Body of pancreas (tissue), 4 donors: ENCODE measurements at regions of chr11 and their contacts with region 1.

Region 1: GRCh38 chr11:120295084-120295483 is 30.0 kb upstream of the TLCD5 start:
- DNase-seq: peak; percentile 52 to 74 (median 71)
- ATAC-seq: peak; percentile 66
- H3K4me3 ChIP-seq: no peak overlapping the region
- H3K27ac ChIP-seq: peak overlapping the region in 2 of 4 donors; percentile 37 to 41
- H3K4me1 ChIP-seq: peaks cover 13% of the 10 kb centered on the region
- H3K27me3 ChIP-seq: no peaks in the 10 kb centered on the region
- CTCF ChIP-seq: no peak
- POLR2A ChIP-seq: no peak

Region 2: DNA sequence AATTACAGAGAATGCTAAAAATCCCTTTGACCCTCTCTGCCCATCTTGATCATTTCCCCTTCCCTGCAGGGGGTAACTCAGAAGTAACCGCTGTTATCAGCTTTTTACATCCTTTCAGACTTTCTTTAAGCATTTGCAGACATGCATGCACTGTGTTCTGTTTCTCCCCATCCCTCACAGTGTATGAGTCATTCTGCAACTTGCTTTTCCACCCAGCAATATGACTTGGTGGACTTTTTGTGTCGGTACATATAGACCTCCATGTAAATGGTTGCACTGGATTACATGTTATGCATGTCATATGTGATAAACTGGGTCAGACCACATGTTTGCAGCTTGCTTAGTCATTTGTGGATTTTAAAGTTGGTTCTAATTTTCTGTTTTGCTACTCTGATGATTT is 478.4 kb before region 1 on chr11:
- intact Hi-C with region 1: no loop called
- DNase-seq: no peak
- ATAC-seq: no peak
- H3K4me3 ChIP-seq: no peak overlapping the region
- H3K27ac ChIP-seq: no peak overlapping the region
- H3K4me1 ChIP-seq: no peaks in the 10 kb centered on the region
- H3K27me3 ChIP-seq: no peaks in the 10 kb centered on the region
- CTCF ChIP-seq: no peak
- POLR2A ChIP-seq: no peak

Region 3: DNA sequence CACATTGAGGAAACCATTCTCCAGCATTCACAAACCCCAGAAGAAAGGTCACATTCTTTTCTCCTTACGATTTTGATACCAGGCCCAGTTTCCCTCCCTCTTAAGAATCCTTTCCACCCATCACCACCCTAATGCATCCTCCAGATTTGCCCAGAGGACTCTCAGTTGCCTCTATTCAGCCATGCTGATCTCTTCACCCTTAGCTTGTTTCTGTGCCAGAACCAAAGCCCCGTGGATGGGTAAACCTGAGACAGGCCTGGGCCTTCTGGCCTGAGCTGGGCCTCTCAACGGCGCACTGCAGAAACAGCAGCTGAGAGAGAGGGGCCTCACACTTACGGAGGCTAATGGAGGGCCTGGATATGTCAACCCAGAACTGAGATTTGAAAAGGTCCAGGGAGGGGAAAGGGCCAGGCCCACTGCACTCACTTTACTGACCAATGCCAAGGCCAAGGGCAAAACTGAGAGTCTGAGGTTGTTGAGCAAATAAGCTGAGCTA is 116.5 kb before region 1 on chr11:
- intact Hi-C with region 1: loop called (anchors 5 kb)
- DNase-seq: no peak
- ATAC-seq: no peak
- H3K4me3 ChIP-seq: no peak overlapping the region
- H3K27ac ChIP-seq: no peak overlapping the region
- H3K4me1 ChIP-seq: peaks cover 21% of the 10 kb centered on the region
- H3K27me3 ChIP-seq: no peaks in the 10 kb centered on the region
- CTCF ChIP-seq: no peak
- POLR2A ChIP-seq: no peak

Region 4: GRCh38 chr11:120235024-120235861 is 59.8 kb before region 1 on chr11:
- intact Hi-C with region 1: loop called (anchors 5 kb)
- DNase-seq: peak; percentile 81 to 86 (median 82)
- ATAC-seq: peak; percentile 80
- H3K4me3 ChIP-seq: no peak overlapping the region
- H3K27ac ChIP-seq: no peak overlapping the region
- H3K4me1 ChIP-seq: peaks cover 13% of the 10 kb centered on the region
- H3K27me3 ChIP-seq: no peaks in the 10 kb centered on the region
- CTCF ChIP-seq: peak; percentile 69 to 89 (median 87)
- POLR2A ChIP-seq: no peak